ENCODE measurements at regions of chr15 and their contacts with region 1.

Region 1: GRCh38 chr15:85831415-85832113 is 36.8 kb upstream of the KLHL25 start:
- DNase-seq: peak; percentile 46 to 90
- H3K4me3 ChIP-seq: no peak overlapping the region
- CTCF ChIP-seq: peak in 1 of 3 donors; percentile 58
- POLR2A ChIP-seq: no peak

Region 2: GRCh38 chr15:85742186-85742821 is 89.3 kb before region 1 on chr15:
- intact Hi-C with region 1: loop called (anchors 5 kb)
- DNase-seq: peak in 1 of 2 donors; percentile 80
- H3K4me3 ChIP-seq: no peak overlapping the region
- CTCF ChIP-seq: no peak
- POLR2A ChIP-seq: no peak